Posterior vena cava (tissue), 2 donors: ENCODE measurements at regions of chr21 and their contacts with region 1.

Region 1: GRCh38 chr21:33434770-33435360 is 31.7 kb downstream of the IFNGR2 start:
- DNase-seq: no peak

Region 2: DNA sequence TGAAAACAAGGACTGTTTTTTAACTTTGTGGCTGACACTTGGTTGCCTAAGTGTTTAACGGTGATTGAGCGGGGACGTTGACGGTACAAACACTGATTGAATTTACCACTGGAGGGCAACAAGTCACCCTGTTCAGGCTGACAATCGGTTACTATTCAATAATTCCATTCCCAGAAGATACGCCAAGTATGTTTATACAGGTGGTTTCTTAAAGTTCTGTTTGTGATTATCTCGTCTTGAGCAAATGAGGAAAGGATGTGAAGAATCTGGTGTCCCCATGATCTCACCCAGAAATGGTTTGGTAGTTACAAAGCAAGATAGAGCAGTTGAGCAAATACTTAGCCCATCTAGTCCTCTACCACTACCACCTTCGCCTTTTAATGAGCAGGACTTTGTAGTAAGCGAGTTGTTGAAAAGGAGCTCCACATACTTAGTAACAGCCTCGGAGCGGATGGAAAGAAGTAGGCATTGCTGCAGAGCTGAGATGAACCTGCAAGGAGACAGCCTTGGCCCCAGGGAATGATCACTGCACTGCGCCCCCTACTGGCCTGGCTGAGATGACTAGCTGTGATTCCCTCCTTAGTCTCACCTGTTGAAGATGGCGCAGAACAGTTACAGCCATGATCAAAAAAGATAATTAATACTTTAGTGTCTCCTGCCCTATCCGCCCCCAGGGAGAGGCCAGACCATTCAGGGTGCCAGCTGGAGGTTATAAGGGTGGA is 73.8 kb before region 1 on chr21:
- intact Hi-C with region 1: loop called in 1 of 2 experiments (anchors 10 kb)
- DNase-seq: peak; percentile 88

Region 3: GRCh38 chr21:33374450-33375096 is 60.3 kb before region 1 on chr21:
- intact Hi-C with region 1: loop called (anchors 10 kb)
- DNase-seq: no peak